Right ventricle myocardium inferior (tissue), 1 donor: ENCODE measurements at regions of chr4 and their contacts with region 1.

Region 1: DNA sequence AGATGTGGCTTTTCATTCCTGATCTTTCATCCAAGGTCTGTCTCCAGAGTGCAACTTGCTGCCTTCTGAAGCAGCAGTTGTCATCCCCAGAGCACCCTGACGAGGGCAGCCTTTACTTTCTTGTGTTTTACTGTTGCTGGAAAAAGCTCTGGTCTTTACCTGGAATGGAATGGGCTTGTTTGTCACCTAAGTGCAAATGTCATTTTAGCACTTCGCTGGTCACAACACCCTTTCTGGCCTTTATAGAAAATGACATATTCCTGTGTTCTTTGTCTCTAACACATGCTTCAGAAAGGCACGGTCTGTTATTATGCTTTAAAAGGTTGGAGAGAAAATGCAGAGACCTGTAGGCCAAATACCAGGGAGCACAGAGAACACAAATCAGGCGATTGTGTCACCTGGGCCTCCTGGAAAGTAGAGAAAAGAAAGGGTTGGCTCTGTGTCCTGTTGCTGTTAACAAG is 332.7 kb upstream of the IGFBP7 start:
- DNase-seq: no peak
- ATAC-seq: peak; percentile 66

Region 2: GRCh38 chr4:56958111-56958517 is 484.7 kb before region 1 on chr4:
- intact Hi-C with region 1: no loop called
- DNase-seq: peak; percentile 88
- ATAC-seq: peak; percentile 97

Region 3: DNA sequence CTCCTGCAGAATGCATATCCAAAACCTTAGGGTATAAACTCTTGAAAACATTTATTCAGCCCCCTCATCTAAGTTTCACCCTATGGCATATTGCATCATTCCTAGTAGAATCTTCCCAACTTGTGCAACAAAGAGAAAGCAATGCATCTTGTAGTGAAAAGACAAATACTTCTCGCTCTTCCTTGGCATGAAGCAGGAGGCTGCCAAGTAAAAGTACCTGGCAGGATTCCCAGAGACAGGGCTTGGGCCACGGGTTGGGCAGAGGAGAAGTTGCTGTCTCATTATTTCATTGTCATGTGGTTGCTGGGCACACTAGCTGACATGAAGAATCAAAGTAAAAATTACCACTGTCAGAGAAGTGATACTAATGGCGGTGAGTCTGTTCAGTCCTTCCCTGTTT is 47.7 kb after region 1 on chr4:
- intact Hi-C with region 1: loop called (anchors 2 kb)
- DNase-seq: no peak
- ATAC-seq: peak; percentile 32

Region 4: GRCh38 chr4:57501720-57502119 is 58.9 kb after region 1 on chr4:
- intact Hi-C with region 1: loop called (anchors 2 kb)
- DNase-seq: no peak
- ATAC-seq: peak; percentile 82

Region 5: GRCh38 chr4:57734104-57734670 is 291.3 kb after region 1 on chr4:
- intact Hi-C with region 1: loop called (anchors 1 kb)
- DNase-seq: no peak
- ATAC-seq: peak; percentile 97

Region 6: GRCh38 chr4:57877047-57877458 is 434.2 kb after region 1 on chr4:
- intact Hi-C with region 1: loop called (anchors 5 kb)
- DNase-seq: no peak
- ATAC-seq: peak; percentile 81

Region 7: GRCh38 chr4:58061970-58062369 is 619.1 kb after region 1 on chr4:
- intact Hi-C with region 1: loop called (anchors 10 kb)
- DNase-seq: no peak
- ATAC-seq: no peak